Kidney (tissue), 22 donors: ENCODE measurements at regions of chr22 and their contacts with region 1.

Region 1: GRCh38 chr22:45645526-45646414 is 25.9 kb upstream of the ATXN10 start:
- DNase-seq: peak; percentile 75 to 89 (median 83)
- H3K4me3 ChIP-seq: peak overlapping the region in 1 of 3 donors; percentile 25
- H3K27ac ChIP-seq: no peak overlapping the region
- H3K4me1 ChIP-seq: peaks cover 0 to 5% (median 0%) of the 10 kb centered on the region in 3 donors
- H3K27me3 ChIP-seq: no peaks in the 10 kb centered on the region
- CTCF ChIP-seq: peak; percentile 95

Region 2: GRCh38 chr22:45397806-45398205 is 248.0 kb before region 1 on chr22:
- intact Hi-C with region 1: no loop called
- DNase-seq: no peak
- H3K4me3 ChIP-seq: no peak overlapping the region
- H3K27ac ChIP-seq: no peak overlapping the region
- H3K4me1 ChIP-seq: no peaks in the 10 kb centered on the region
- H3K27me3 ChIP-seq: no peaks in the 10 kb centered on the region
- CTCF ChIP-seq: no peak

Region 3: DNA sequence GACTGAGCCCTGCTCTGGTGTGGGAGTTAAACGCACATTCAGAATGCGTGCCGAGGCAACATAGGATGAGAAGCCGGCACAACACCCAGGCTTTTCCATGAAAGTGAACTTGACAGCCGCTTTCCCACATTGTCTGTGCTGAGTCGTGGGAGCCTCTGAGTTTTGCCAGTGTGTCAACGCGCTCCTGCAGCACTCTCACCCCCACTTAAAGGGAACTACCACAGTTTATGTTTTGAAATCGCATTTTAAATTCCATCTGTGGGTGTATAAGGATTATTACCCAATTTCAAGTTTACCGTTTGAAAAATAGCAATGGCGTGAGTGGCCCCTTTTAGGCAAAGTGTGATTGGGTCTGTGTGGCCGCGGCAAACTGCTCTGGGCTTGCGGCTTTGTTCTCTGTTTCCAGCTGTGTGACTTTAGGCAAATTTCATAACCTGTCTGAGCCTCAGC is 61.6 kb before region 1 on chr22:
- intact Hi-C with region 1: loop called (anchors 10 kb)
- DNase-seq: peak in 1 of 5 donors; percentile 36
- H3K4me3 ChIP-seq: no peak overlapping the region
- H3K27ac ChIP-seq: no peak overlapping the region
- H3K4me1 ChIP-seq: peaks cover 0 to 2% (median 0%) of the 10 kb centered on the region in 3 donors
- H3K27me3 ChIP-seq: no peaks in the 10 kb centered on the region
- CTCF ChIP-seq: no peak

Region 4: GRCh38 chr22:45757068-45757467 is 111.3 kb after region 1 on chr22:
- intact Hi-C with region 1: no loop called
- DNase-seq: peak; percentile 74 to 83 (median 77)
- H3K4me3 ChIP-seq: no peak overlapping the region
- H3K27ac ChIP-seq: peak overlapping the region in 1 of 2 donors; percentile 34
- H3K4me1 ChIP-seq: no peaks in the 10 kb centered on the region
- H3K27me3 ChIP-seq: no peaks in the 10 kb centered on the region
- CTCF ChIP-seq: no peak